Prostate gland (tissue), 2 donors: ENCODE measurements at regions of chr9 and their contacts with region 1.

Region 1: GRCh38 chr9:4086119-4087090 is 213.5 kb downstream of the GLIS3 start:
- DNase-seq: no peak
- H3K4me3 ChIP-seq: no peak overlapping the region
- H3K27ac ChIP-seq: no peak overlapping the region
- H3K4me1 ChIP-seq: no peaks in the 10 kb centered on the region
- H3K27me3 ChIP-seq: no peaks in the 10 kb centered on the region
- CTCF ChIP-seq: no peak
- POLR2A ChIP-seq: no peak

Region 2: DNA sequence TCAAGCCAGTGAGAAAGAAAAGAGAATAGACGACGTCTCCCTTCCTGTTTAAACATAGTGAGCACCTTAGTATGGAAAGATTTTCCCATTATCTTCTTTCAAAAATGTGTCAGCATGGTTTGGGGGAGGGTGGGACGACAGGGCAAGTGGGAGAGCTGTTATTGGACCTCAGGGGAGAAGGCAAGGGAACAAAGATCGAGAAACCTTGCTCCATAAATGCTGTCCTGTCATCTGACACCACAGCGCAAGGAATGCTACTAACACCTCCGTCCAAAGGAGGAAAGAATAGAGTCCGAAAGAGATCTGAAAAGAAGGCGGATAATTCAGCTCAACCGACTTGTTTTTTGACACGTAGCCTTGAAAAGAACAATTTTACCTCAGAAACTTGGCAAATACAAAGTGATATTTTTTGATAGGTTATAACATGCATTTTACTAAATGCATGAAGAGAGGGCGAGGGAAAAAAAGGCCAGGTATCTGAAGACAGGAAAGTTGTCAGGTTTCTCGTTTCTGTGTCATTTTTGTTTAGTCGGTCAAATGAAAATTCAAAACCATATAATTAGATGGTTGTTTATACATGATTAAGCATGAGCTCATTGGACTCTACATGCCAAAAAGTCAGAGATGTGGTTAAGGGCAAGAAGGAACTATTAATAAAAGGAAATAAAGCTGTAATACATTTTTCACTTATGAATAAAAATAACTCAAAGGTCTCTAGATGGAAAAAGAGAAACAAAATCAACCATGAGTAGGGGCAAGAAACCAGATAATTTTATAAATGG is 57.7 kb after region 1 on chr9:
- intact Hi-C with region 1: loop called (anchors 10 kb)
- DNase-seq: no peak
- H3K4me3 ChIP-seq: peak overlapping the region in 1 of 2 donors; percentile 24
- H3K27ac ChIP-seq: peak overlapping the region; percentile 42 to 75
- H3K4me1 ChIP-seq: no peaks in the 10 kb centered on the region
- H3K27me3 ChIP-seq: no peaks in the 10 kb centered on the region
- CTCF ChIP-seq: no peak
- POLR2A ChIP-seq: no peak

Region 3: GRCh38 chr9:4164356-4164755 is 78.0 kb after region 1 on chr9:
- intact Hi-C with region 1: loop called (anchors 5 kb)
- DNase-seq: no peak
- H3K4me3 ChIP-seq: no peak overlapping the region
- H3K27ac ChIP-seq: no peak overlapping the region
- H3K4me1 ChIP-seq: no peaks in the 10 kb centered on the region
- H3K27me3 ChIP-seq: no peaks in the 10 kb centered on the region
- CTCF ChIP-seq: no peak
- POLR2A ChIP-seq: no peak